Endothelial cell of umbilical vein (primary cell): ENCODE measurements at regions of chr1 and their contacts with region 1.

Region 1: GRCh38 chr1:202716654-202717053 is 6.4 kb upstream of the SYT2 start:
- DNase-seq: no peak
- H3K4me3 ChIP-seq: no peak overlapping the region
- H3K27ac ChIP-seq: no peak overlapping the region
- H3K4me1 ChIP-seq: peaks cover 13% of the 10 kb centered on the region
- H3K27me3 ChIP-seq: peaks cover 9 to 20% of the 10 kb centered on the region in 2 experiments
- CTCF ChIP-seq: no peak
- POLR2A ChIP-seq: no peak

Region 2: GRCh38 chr1:201877877-201878401 is 838.7 kb before region 1 on chr1:
- CTCF ChIA-PET with region 1: no interaction called
- POLR2A ChIA-PET with region 1: no interaction called
- dilution Hi-C with region 1: no loop called
- intact Hi-C with region 1: no loop called
- DNase-seq: peak; percentile 64
- H3K4me3 ChIP-seq: no peak overlapping the region
- H3K27ac ChIP-seq: no peak overlapping the region
- H3K4me1 ChIP-seq: no peaks in the 10 kb centered on the region
- H3K27me3 ChIP-seq: no peaks in the 10 kb centered on the region
- CTCF ChIP-seq: peak; percentile 53 to 67
- POLR2A ChIP-seq: no peak

Region 3: DNA sequence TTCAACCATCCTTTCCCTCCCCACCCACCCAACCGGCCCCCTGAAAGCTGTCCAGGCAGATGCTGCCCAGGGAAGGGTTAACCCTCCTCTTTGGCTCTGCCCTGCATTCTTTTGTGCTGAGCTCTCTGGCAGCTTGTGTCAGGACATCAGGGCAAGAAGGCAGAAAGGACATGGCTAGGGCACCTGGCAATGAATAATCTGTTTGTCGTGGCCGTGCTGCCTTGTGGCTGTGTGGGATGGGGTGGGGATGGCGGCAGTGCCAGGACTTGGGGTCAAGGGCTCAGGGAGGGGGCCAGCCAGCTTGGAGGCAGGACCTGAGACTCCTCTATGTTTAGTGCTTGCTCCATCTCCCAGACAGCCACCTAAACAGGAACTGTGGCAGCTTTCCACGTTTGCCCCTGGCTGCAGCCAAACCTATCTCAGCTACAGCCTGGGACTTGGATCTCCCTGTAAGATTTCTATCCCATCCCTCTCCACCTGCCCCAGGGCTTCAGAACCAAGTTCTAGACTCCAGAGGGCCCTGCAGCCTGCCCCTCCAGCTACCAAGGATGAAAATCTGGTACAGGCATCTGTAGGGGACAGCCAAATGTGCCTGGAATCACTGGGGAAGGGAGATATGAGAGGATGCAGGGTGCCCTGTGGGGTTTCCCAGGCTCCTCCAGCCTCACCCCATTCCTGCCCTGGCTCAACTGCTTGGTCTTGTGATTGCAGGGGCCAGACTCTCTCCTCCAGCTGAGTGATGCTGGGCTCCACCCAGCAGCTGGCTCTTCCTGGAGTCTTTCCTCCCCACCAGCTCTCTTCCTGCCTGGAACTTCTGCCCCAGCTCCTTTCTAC is 603.6 kb before region 1 on chr1:
- CTCF ChIA-PET with region 1: no interaction called
- POLR2A ChIA-PET with region 1: no interaction called
- dilution Hi-C with region 1: no loop called
- intact Hi-C with region 1: no loop called
- DNase-seq: no peak
- H3K4me3 ChIP-seq: no peak overlapping the region
- H3K27ac ChIP-seq: no peak overlapping the region
- H3K4me1 ChIP-seq: no peaks in the 10 kb centered on the region
- H3K27me3 ChIP-seq: peaks cover 0 to 3% of the 10 kb centered on the region in 2 experiments
- CTCF ChIP-seq: no peak
- POLR2A ChIP-seq: no peak

Region 4: DNA sequence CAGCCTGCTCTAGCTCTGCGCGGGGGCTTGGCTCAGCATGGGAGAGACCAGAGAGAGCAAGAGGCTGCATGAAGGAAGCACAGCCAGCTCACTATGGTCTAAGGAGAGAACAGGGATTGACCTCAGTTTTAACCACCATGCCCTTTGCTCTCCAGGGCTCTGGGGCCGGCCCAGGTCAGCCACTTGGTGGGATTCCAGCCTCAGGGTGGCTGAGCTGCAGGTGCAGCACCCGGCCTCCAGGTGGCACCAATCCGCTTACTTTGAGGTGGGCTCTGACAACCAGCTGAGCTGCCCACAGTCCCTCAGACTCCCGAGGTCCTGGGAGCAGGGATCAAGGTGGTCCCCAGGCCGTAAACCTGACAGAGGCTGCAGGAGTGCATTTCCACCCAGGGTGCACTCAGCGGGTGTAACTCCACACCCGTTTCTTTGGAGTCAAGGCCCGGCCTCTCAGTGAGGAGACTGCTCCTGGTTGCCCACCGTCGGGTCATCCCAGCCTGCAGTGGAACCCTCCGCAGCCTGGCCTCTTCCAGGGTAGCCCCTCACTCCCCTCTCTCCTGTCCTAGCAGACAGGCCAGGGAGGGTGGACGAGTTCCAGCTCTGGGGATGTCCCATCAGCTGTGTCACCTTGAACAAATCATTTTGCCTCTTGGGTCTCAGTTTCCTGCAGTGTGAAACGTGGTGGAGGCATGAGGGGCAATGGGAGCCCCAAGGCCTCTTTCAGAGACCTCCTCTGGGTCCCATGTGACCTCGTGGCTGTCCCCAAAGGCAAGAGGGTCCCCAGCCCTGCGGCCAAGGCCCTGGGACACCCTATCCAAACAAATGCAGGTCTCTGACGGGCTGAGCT is 523.7 kb before region 1 on chr1:
- CTCF ChIA-PET with region 1: interaction called, 102 read pairs
- POLR2A ChIA-PET with region 1: interaction called, 3 read pairs
- dilution Hi-C with region 1: no loop called
- intact Hi-C with region 1: loop called (anchors 1 kb)
- DNase-seq: peak; percentile 49
- H3K4me3 ChIP-seq: no peak overlapping the region
- H3K27ac ChIP-seq: no peak overlapping the region
- H3K4me1 ChIP-seq: no peaks in the 10 kb centered on the region
- H3K27me3 ChIP-seq: peaks cover 32 to 33% of the 10 kb centered on the region in 2 experiments
- CTCF ChIP-seq: peak; percentile 87 to 93
- POLR2A ChIP-seq: no peak

Region 5: GRCh38 chr1:202348509-202349205 is 368.0 kb before region 1 on chr1 and contains the start of gene PPP1R12B:
- CTCF ChIA-PET with region 1: interaction called, 54 read pairs
- POLR2A ChIA-PET with region 1: no interaction called
- dilution Hi-C with region 1: no loop called
- intact Hi-C with region 1: loop called (anchors 1 kb)
- DNase-seq: peak; percentile 99
- H3K4me3 ChIP-seq: peak within 1 kb of the TSS; percentile 44 to 75 (median 55)
- H3K27ac ChIP-seq: peak within 1 kb of the TSS; percentile 52
- H3K4me1 ChIP-seq: peaks cover 7% of the 10 kb centered on the region
- H3K27me3 ChIP-seq: no peaks in the 10 kb centered on the region
- CTCF ChIP-seq: no peak
- POLR2A ChIP-seq: peak; percentile 71
- total RNA-seq, gene PPP1R12B: 11.5 and 11.6 TPM in 2 replicates

Region 6: GRCh38 chr1:202501281-202501680 is 215.4 kb before region 1 on chr1:
- CTCF ChIA-PET with region 1: interaction called, 32 read pairs
- POLR2A ChIA-PET with region 1: no interaction called
- dilution Hi-C with region 1: no loop called
- intact Hi-C with region 1: loop called (anchors 1 kb)
- DNase-seq: peak; percentile 32
- H3K4me3 ChIP-seq: no peak overlapping the region
- H3K27ac ChIP-seq: no peak overlapping the region
- H3K4me1 ChIP-seq: no peaks in the 10 kb centered on the region
- H3K27me3 ChIP-seq: no peaks in the 10 kb centered on the region
- CTCF ChIP-seq: peak in 1 of 2 donors; percentile 12
- POLR2A ChIP-seq: no peak

Region 7: GRCh38 chr1:202684716-202685115 is 31.9 kb before region 1 on chr1:
- CTCF ChIA-PET with region 1: no interaction called
- POLR2A ChIA-PET with region 1: no interaction called
- dilution Hi-C with region 1: no loop called
- intact Hi-C with region 1: no loop called
- DNase-seq: no peak
- H3K4me3 ChIP-seq: no peak overlapping the region
- H3K27ac ChIP-seq: no peak overlapping the region
- H3K4me1 ChIP-seq: no peaks in the 10 kb centered on the region
- H3K27me3 ChIP-seq: peaks cover 3 to 12% of the 10 kb centered on the region in 2 experiments
- CTCF ChIP-seq: no peak
- POLR2A ChIP-seq: no peak

Region 8: DNA sequence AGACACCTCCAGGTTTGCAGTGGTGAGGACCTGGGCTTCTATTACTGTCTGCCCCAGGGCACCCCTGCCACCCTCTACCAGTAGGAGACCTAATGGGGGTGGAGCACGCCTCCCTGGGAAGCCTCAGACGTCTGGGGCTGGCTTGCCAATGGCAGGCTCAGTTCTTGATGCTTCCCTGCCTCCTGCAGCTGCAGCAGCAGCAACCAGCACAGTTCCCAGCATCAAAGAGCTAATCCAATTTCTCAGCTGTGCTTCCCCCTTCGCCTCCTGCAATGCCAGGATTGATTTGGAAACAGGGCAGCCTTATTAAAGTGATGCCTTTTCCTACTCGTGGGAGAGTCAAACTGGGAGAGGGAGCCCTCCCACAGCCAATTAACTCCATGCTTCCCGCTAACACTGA is 14.6 kb before region 1 on chr1:
- CTCF ChIA-PET with region 1: interaction called, 12 read pairs
- POLR2A ChIA-PET with region 1: no interaction called
- dilution Hi-C with region 1: no loop called
- intact Hi-C with region 1: no loop called
- DNase-seq: no peak
- H3K4me3 ChIP-seq: no peak overlapping the region
- H3K27ac ChIP-seq: no peak overlapping the region
- H3K4me1 ChIP-seq: no peaks in the 10 kb centered on the region
- H3K27me3 ChIP-seq: peaks cover 21% of the 10 kb centered on the region in 2 experiments
- CTCF ChIP-seq: no peak
- POLR2A ChIP-seq: no peak